MCF 10A (cell line): ENCODE measurements at regions of chr7 and their contacts with region 1.

Region 1: GRCh38 chr7:99616359-99617191 is at the start of gene ZSCAN25:
- DNase-seq: peak; percentile 91
- H3K4me3 Mint-ChIP-seq: peak within 1 kb of the TSS; percentile 90
- H3K27ac Mint-ChIP-seq: peak within 1 kb of the TSS; percentile 93
- H3K4me1 Mint-ChIP-seq: peaks cover 24% of the 10 kb centered on the region
- H3K27me3 Mint-ChIP-seq: no peaks in the 10 kb centered on the region
- CTCF ChIP-seq: no peak
- total RNA-seq, gene ZSCAN25: 17.6 and 20.9 TPM in 2 replicates

Region 2: GRCh38 chr7:99472561-99473243 is 143.9 kb before region 1 on chr7 and contains the start of gene ZNF789:
- CTCF ChIA-PET with region 1: no interaction called
- POLR2A ChIA-PET with region 1: interaction called, 3 read pairs
- intact Hi-C with region 1: loop called (anchors 10 kb)
- DNase-seq: peak; percentile 96
- H3K4me3 Mint-ChIP-seq: peak within 1 kb of the TSS; percentile 91
- H3K27ac Mint-ChIP-seq: peak within 1 kb of the TSS; percentile 92
- H3K4me1 Mint-ChIP-seq: no peaks in the 10 kb centered on the region
- H3K27me3 Mint-ChIP-seq: no peaks in the 10 kb centered on the region
- CTCF ChIP-seq: no peak
- total RNA-seq, gene ZNF789: 15.0 and 19.9 TPM in 2 replicates

Region 3: GRCh38 chr7:99514050-99514449 is 102.5 kb before region 1 on chr7:
- CTCF ChIA-PET with region 1: no interaction called
- POLR2A ChIA-PET with region 1: no interaction called
- intact Hi-C with region 1: no loop called
- DNase-seq: no peak
- H3K4me3 Mint-ChIP-seq: no peak overlapping the region
- H3K27ac Mint-ChIP-seq: no peak overlapping the region
- H3K4me1 Mint-ChIP-seq: no peaks in the 10 kb centered on the region
- H3K27me3 Mint-ChIP-seq: no peaks in the 10 kb centered on the region
- CTCF ChIP-seq: no peak

Region 4: DNA sequence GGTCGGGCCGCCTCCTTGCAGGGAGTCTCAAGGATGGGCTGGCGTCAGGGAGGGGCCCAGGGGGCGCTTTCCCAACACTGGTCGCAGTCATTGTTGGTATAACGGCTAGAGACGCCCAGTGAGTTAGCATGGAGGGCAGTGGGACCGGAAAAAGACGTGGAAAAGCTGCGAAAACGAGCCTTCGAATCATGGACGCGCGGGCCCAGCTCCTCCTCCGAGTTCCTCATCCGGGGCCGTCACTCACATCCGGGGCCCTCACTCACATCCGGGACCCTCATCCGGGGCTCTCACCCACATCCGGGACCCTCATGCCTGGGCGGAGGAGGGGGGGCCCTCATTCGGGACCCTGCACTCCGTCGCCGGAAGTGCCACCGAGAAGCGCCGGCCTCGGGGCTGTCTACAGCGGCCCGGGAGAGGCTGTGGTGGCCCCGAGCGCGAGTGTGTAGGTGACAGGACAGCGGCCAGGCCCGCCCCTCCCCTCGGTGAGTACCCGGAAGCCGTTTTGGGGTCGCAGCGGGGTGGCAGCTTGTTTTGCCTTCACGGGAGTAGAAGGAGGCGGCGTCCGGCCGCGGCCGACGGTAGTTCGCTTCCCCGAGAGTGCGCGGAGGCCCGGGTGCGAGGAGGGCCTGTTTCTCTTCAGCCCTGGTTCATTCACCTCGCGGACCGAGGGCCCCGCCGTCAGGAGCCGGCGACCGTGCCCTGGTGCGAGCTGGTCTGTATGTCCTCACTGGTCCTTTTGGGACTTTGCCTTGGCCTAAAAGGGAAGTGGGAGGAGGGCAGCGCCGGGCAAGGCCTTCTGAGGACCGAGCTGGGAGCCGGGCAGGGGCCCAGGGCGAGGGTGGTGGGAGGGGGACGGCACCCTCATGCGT is 58.0 kb before region 1 on chr7 and contains the start of gene ZNF655:
- CTCF ChIA-PET with region 1: no interaction called
- POLR2A ChIA-PET with region 1: interaction called, 55 read pairs
- intact Hi-C with region 1: loop called (anchors 1 kb)
- DNase-seq: peak; percentile 85
- H3K4me3 Mint-ChIP-seq: peak within 1 kb of the TSS; percentile 85
- H3K27ac Mint-ChIP-seq: peak within 1 kb of the TSS; percentile 86
- H3K4me1 Mint-ChIP-seq: peaks cover 33% of the 10 kb centered on the region
- H3K27me3 Mint-ChIP-seq: no peaks in the 10 kb centered on the region
- CTCF ChIP-seq: no peak
- total RNA-seq, gene ZNF655: 85.2 and 89.9 TPM in 2 replicates

Region 5: GRCh38 chr7:99631295-99632109 is 14.9 kb after region 1 on chr7:
- CTCF ChIA-PET with region 1: interaction called, 4 read pairs
- POLR2A ChIA-PET with region 1: interaction called, 51 read pairs
- intact Hi-C with region 1: no loop called
- DNase-seq: peak; percentile 61
- H3K4me3 Mint-ChIP-seq: no peak overlapping the region
- H3K27ac Mint-ChIP-seq: peak overlapping the region; percentile 84
- H3K4me1 Mint-ChIP-seq: peaks cover 21% of the 10 kb centered on the region
- H3K27me3 Mint-ChIP-seq: no peaks in the 10 kb centered on the region
- CTCF ChIP-seq: peak; percentile 64

Region 6: GRCh38 chr7:99752390-99752789 is 135.8 kb after region 1 on chr7:
- CTCF ChIA-PET with region 1: no interaction called
- POLR2A ChIA-PET with region 1: interaction called, 14 read pairs
- intact Hi-C with region 1: no loop called
- DNase-seq: no peak
- H3K4me3 Mint-ChIP-seq: peak overlapping the region; percentile 37
- H3K27ac Mint-ChIP-seq: peak overlapping the region; percentile 9
- H3K4me1 Mint-ChIP-seq: peaks cover 24% of the 10 kb centered on the region
- H3K27me3 Mint-ChIP-seq: no peaks in the 10 kb centered on the region
- CTCF ChIP-seq: no peak

Region 7: GRCh38 chr7:99829524-99830160 is 213.1 kb after region 1 on chr7:
- CTCF ChIA-PET with region 1: no interaction called
- POLR2A ChIA-PET with region 1: interaction called, 15 read pairs
- intact Hi-C with region 1: no loop called
- DNase-seq: no peak
- H3K4me3 Mint-ChIP-seq: no peak overlapping the region
- H3K27ac Mint-ChIP-seq: no peak overlapping the region
- H3K4me1 Mint-ChIP-seq: peaks cover 45% of the 10 kb centered on the region
- H3K27me3 Mint-ChIP-seq: no peaks in the 10 kb centered on the region
- CTCF ChIP-seq: no peak

Region 8: GRCh38 chr7:99837649-99838361 is 221.2 kb after region 1 on chr7:
- CTCF ChIA-PET with region 1: interaction called, 3 read pairs
- POLR2A ChIA-PET with region 1: interaction called, 6 read pairs
- intact Hi-C with region 1: loop called (anchors 5 kb)
- DNase-seq: peak; percentile 30
- H3K4me3 Mint-ChIP-seq: no peak overlapping the region
- H3K27ac Mint-ChIP-seq: peak overlapping the region; percentile 36
- H3K4me1 Mint-ChIP-seq: peaks cover 7% of the 10 kb centered on the region
- H3K27me3 Mint-ChIP-seq: no peaks in the 10 kb centered on the region
- CTCF ChIP-seq: peak; percentile 48